Heart left ventricle (tissue), 16 donors: ENCODE measurements at regions of chr2 and their contacts with region 1.

Region 1: DNA sequence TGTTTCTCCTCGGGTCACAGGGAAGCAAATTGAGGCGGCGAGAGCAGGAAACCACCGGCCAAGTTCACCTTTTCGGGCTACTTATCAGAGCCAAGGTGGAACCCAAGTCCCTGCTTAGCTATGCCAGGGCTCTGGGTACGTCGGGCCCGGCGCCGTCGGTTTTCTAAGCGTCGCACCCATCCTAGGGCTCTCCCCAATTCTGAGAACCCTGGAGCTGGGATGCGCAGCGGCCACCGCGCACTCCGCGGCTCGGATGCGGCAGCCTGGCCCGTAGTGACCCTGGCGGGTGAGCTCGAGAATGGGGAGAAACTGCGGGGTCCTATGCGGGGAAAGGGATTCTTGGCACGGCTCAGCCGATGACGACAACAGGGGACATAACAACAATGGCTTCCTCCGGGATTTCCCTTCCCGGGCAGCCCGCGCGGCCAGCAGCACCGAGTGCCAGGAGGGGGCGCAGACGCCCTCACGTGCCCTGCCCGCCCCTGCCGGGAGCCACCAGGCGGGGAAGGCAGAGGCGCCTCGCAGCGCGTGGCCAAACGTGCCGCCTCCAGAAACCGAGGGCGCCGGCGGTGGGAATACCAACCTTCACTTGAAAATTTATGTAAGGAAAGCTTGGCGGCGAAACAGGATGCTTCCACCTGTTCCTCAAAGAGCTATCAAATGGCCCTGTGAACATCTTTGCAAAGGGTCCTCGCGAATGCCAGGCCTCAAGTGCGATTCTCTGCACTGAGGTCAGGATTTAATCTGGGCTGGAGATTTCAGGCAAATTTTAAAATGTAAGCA is 2.1 kb upstream of the SLC30A3 start:
- DNase-seq: peak; percentile 75 to 86 (median 78)
- ATAC-seq: peak; percentile 62 to 85 (median 79)
- H3K4me3 ChIP-seq: peak overlapping the region; percentile 10 to 81 (median 62)
- H3K27ac ChIP-seq: peak overlapping the region in 10 of 12 donors; percentile 17 to 80 (median 57)
- H3K4me1 ChIP-seq: peaks cover 0 to 43% (median 26%) of the 10 kb centered on the region in 12 donors
- H3K27me3 ChIP-seq: peaks cover 17 to 70% (median 38%) of the 10 kb centered on the region in 9 donors
- CTCF ChIP-seq: peak; percentile 30 to 71 (median 60)
- POLR2A ChIP-seq: no peak

Region 2: GRCh38 chr2:27211829-27212627 is 52.9 kb before region 1 on chr2 and contains the starts of genes ATRAID and SLC5A6:
- intact Hi-C with region 1: no loop called
- DNase-seq: peak; percentile 89 to 94 (median 91)
- ATAC-seq: peak; percentile 95 to 98 (median 98)
- H3K4me3 ChIP-seq: peak within 1 kb of the TSS; percentile 63 to 97 (median 80)
- H3K27ac ChIP-seq: peak within 1 kb of the TSS; percentile 93 to 100 (median 98)
- H3K4me1 ChIP-seq: peaks cover 4 to 25% (median 18%) of the 10 kb centered on the region in 12 donors
- H3K27me3 ChIP-seq: no peaks in the 10 kb centered on the region
- CTCF ChIP-seq: no peak
- POLR2A ChIP-seq: peak in 1 of 2 donors; percentile 84
- total RNA-seq, gene ATRAID: 96.9 to 210 (median 144) TPM
- total RNA-seq, gene SLC5A6: 6.3 to 16.7 (median 10.3) TPM

Region 3: DNA sequence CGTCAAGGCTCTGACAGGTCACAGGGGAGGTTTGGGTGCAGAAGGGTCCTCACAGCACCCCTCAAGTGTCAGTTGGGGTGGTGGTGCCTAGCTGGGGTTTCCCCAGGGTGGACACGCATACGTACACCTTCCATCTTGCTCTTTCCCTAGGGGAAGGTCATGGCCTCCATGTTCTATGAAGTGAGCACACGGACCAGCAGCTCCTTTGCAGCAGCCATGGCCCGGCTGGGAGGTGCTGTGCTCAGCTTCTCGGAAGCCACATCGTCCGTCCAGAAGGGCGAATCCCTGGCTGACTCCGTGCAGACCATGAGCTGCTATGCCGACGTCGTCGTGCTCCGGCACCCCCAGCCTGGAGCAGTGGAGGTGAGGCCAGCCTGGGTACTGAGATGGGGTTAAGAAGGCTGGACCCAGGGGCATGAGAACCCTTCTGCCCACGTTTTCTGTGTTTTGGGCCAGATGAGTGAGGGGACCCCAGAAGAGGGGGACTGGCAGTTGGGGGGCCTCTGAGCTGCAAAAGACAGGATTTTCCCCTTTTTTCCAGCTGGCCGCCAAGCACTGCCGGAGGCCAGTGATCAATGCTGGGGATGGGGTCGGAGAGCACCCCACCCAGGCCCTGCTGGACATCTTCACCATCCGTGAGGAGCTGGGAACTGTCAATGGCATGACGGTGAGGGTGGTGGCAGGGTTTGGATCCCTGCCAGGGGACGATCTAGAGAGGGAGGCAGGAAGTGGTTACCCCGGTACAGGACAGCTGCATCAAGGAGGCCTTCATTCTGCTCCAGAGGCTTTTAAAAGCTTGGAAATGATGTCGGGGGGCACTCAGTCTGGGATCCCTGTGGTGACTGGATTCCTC is 23.0 kb before region 1 on chr2:
- intact Hi-C with region 1: no loop called
- DNase-seq: no peak
- ATAC-seq: no peak
- H3K4me3 ChIP-seq: no peak overlapping the region
- H3K27ac ChIP-seq: no peak overlapping the region
- H3K4me1 ChIP-seq: peaks cover 0 to 26% (median 5%) of the 10 kb centered on the region in 12 donors
- H3K27me3 ChIP-seq: no peaks in the 10 kb centered on the region
- CTCF ChIP-seq: no peak
- POLR2A ChIP-seq: no peak

Region 4: DNA sequence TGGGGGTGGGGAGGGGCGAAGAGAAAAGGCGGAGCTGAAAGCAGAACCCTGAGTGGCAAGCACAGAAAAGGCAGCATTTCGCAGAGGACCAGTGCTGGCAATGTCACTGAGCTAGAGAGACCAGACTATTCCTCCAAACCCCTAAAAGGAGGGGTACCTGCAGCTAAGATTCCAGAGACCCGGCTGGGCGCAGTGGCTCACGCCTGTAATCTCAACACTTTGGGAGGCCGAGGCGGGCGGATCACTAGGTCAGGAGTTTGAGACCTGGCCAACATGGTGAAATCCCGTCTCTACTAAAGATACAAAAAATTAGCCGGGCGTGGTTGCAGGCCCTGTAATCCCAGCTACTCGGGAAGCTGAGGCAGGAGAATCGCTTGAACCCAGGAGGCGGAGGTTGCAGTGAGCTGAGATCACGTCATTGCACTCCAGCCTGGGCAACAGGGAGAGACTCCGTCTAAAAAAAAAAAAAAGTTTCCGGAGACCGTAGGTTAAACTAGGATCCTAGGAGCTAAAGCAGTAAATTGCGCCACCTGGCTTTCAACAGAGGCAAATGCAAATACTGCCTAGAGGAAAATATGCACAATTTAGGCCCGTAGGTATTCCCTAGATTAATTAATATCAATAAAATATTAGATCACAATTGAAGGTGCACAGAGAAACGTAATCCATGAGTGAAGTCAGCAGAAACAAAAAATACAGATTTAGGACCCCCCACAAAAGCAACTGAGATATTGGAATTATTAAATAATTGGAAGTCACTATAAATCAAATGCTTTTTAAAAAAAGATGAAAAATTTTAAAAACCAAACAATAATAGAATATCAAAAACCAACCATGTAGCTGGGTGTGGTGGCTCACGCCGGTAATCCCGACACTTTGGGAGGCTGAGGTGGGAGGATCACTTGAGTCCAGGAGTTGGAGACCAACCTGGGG is 38.4 kb after region 1 on chr2:
- intact Hi-C with region 1: loop called in 2 of 10 experiments (anchors 5 kb)
- DNase-seq: peak in 3 of 5 donors; percentile 51 to 68 (median 63)
- ATAC-seq: peak; percentile 45 to 73 (median 60)
- H3K4me3 ChIP-seq: peak overlapping the region in 11 of 12 donors; percentile 4 to 52 (median 36)
- H3K27ac ChIP-seq: peak overlapping the region in 9 of 12 donors; percentile 27 to 66 (median 43)
- H3K4me1 ChIP-seq: peaks cover 0 to 30% (median 14%) of the 10 kb centered on the region in 12 donors
- H3K27me3 ChIP-seq: peaks cover 0 to 39% (median 23%) of the 10 kb centered on the region in 9 donors
- CTCF ChIP-seq: peak; percentile 75 to 92 (median 89)
- POLR2A ChIP-seq: no peak